ENCODE measurements at regions of chr17 and their contacts with region 1.

Region 1: DNA sequence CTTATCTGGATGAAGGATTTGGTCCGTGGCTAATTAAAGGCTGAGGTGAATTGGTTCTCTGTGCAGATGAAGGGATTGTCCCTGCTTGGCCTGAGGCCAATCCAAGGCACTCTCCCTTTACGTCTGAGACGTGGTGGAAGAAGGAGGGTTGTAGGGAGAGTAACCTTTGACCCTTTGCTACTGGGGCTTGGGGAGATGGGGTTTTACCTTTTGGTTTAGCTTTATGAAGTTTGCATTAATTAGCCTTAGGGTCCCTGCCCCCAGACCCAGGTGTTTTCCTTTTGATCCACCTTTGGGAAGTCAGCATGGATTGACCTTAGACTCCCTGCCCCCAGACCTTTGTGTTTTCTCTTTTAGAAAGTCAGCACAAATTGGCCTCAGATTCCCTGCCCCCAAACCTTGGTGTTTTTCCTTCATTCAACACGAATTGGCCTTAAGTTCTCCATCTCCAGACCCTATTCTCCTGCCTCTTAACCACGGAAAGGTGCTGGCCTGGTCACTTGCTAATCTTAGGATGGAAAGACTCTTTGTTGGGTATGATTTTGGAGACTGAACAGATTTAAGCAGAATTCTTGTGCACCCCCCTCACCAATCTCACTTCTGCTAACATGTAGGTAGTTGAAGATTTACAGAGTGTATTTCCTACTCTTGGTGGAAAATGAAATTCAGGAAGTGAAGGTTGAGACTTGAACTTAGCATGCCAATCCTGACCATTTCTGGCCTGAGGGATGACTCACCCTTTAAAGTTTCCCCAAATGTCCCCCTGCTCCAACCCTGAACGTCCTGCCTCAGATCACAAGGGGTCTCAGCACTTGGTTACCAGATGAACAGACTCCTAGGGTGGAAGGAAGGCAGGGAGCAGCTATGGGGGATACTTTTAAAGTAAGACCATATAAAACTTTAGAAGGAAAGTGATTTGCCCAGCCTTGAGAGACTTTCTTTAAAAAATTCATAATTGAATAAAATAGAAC is 23.1 kb upstream of the MMD start:
- DNase-seq: no peak
- H3K4me3 ChIP-seq: no peak overlapping the region
- H3K27ac ChIP-seq: no peak overlapping the region
- H3K4me1 ChIP-seq: no peaks in the 10 kb centered on the region
- H3K27me3 ChIP-seq: no peaks in the 10 kb centered on the region
- CTCF ChIP-seq: no peak
- POLR2A ChIP-seq: no peak

Region 2: GRCh38 chr17:55273579-55274354 is 171.0 kb before region 1 on chr17:
- intact Hi-C with region 1: loop called (anchors 5 kb)
- DNase-seq: peak; percentile 80
- H3K4me3 ChIP-seq: no peak overlapping the region
- H3K27ac ChIP-seq: peak overlapping the region; percentile 62 to 66
- H3K4me1 ChIP-seq: peaks cover 5% of the 10 kb centered on the region
- H3K27me3 ChIP-seq: no peaks in the 10 kb centered on the region
- CTCF ChIP-seq: no peak
- POLR2A ChIP-seq: no peak

Region 3: GRCh38 chr17:55433629-55434305 is 11.0 kb before region 1 on chr17:
- intact Hi-C with region 1: no loop called
- DNase-seq: peak; percentile 77
- H3K4me3 ChIP-seq: no peak overlapping the region
- H3K27ac ChIP-seq: peak overlapping the region; percentile 23 to 49
- H3K4me1 ChIP-seq: peaks cover 6% of the 10 kb centered on the region
- H3K27me3 ChIP-seq: no peaks in the 10 kb centered on the region
- CTCF ChIP-seq: no peak
- POLR2A ChIP-seq: no peak

Measured in prostate gland (tissue), 2 donors.